A549 (cell line): ENCODE measurements at regions of chr15 and their contacts with region 1.

Region 1: GRCh38 chr15:50182219-50183013 is 420 bp downstream of the SLC27A2 start:
- DNase-seq: peak; percentile 55 to 61
- ATAC-seq: peak; percentile 84 to 88
- H3K4me3 ChIP-seq: peak overlapping the region; percentile 73
- H3K27ac ChIP-seq: peak overlapping the region; percentile 76 to 88
- H3K4me1 ChIP-seq: peaks cover 27% of the 10 kb centered on the region; the same call in 2 of the 3 replicates
- CTCF ChIP-seq: peak; percentile 8; the same call in 1 of the 3 replicates
- EP300 ChIP-seq: no peak
- POLR2A ChIP-seq: peak; percentile 11; the same call in 1 of the 2 replicates
- RAD21 ChIP-seq: peak in 1 of 2 experiments; percentile 2; a peak in 3 of 5 replicates

Region 2: DNA sequence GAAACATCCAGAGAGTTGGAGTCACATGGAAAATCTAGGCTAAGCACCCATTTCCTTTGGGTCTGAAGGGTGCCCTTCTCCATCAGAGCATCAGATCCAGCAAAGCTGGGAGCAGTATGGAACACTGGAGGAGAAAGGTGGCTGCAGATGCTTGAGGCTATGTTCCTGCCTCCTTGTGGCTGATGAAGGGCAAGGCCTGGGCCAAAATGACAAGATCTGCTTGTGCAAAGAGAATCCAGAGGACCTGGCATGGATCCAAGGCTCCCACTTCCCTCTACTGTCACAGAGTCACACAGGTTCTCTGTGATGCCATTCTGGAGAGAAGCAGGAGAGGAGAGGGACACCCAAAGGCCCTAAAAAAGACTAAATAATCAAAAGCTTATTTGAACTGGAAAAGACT is 54.1 kb before region 1 on chr15:
- CTCF ChIA-PET with region 1: no interaction called
- POLR2A ChIA-PET with region 1: no interaction called
- DNase-seq: peak in 1 of 2 experiments; percentile 52
- ATAC-seq: peak; percentile 39 to 64; a peak in 3 of 6 replicates
- H3K4me3 ChIP-seq: no peak overlapping the region
- H3K27ac ChIP-seq: no peak overlapping the region
- H3K4me1 ChIP-seq: peaks cover 4% of the 10 kb centered on the region; the same call in 1 of the 3 replicates
- CTCF ChIP-seq: no peak
- EP300 ChIP-seq: no peak
- POLR2A ChIP-seq: no peak
- RAD21 ChIP-seq: no peak

Region 3: DNA sequence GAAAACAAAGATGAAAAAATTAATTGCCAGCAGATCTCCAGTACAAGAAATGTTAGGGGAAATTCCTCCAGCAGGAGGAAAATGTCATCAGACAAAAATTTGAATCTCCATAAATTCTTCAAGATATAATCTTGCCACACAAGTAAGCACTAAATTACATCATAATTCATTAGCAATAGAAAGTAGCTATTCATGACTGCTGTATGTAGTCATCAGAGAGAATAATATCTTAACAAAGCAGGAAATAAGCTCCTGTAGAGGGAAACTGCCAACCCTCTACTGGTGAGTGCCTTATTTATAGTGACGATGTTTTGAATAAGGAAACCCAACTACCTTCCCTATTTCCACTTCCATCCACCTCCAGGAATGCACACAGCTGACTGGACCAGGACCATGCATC is 16.2 kb before region 1 on chr15:
- CTCF ChIA-PET with region 1: interaction called, 87 read pairs
- POLR2A ChIA-PET with region 1: no interaction called
- DNase-seq: peak; percentile 38 to 71
- ATAC-seq: peak; percentile 77 to 89
- H3K4me3 ChIP-seq: no peak overlapping the region; the same call in 2 of the 3 replicates
- H3K27ac ChIP-seq: peak overlapping the region; percentile 88 to 92
- H3K4me1 ChIP-seq: peaks cover 63% of the 10 kb centered on the region
- CTCF ChIP-seq: no peak
- EP300 ChIP-seq: peak; percentile 22 to 28; a peak in 2 of 5 replicates
- POLR2A ChIP-seq: no peak
- RAD21 ChIP-seq: no peak; a peak in 1 of 5 replicates

Region 4: DNA sequence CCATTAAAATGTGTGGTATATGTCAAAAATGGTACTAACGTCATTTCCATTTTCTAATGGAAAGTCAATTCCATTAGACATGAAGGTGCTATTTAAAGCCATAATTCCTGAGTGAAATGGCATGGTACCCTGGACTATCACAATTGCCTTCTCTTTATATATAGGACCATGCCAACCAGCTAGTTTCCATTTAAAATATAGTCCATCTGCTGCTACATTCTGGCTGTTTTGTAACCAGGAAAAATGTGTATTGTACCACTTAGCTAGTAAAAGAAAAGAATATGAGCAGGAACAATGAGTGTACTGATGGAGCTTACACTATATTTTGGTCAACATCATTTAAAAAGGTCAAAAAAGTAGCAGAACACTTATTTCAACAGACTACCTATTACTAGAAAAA is 113.5 kb after region 1 on chr15:
- CTCF ChIA-PET with region 1: interaction called, 11 read pairs
- POLR2A ChIA-PET with region 1: no interaction called
- DNase-seq: no peak
- ATAC-seq: no peak
- H3K4me3 ChIP-seq: no peak overlapping the region
- H3K27ac ChIP-seq: no peak overlapping the region
- H3K4me1 ChIP-seq: no peaks in the 10 kb centered on the region
- CTCF ChIP-seq: no peak
- EP300 ChIP-seq: no peak
- POLR2A ChIP-seq: no peak
- RAD21 ChIP-seq: no peak